Heart right ventricle (tissue), 16 donors: ENCODE measurements at regions of chr1 and their contacts with region 1.

Region 1: DNA sequence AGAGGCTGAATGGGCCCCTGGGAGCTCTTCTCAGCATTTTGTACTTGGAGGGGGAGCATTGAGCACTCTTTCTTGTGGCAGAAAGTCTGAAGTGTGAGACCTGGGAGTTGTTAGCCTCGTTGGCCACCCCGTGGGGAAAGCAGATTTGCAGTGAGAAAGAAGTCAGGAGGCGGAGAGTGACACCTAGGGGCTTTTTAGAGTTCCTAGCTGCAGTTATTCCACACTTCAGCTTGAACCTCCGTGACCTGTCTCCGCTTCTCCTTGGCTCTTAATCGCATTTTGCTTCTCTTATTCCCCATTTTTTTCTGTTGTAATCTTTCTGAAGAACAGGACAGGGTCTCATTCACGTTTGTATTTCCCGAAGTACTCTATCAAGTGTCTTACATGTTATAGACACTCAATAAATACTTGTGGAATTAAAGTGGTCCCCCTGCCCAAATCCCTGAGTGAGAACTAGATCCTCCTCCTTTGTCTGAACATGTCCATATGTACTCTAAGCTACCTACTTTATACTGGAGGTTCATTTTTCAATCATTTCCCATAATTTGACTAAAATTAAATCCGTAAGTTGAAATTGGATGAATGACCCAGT is 14.5 kb upstream of the C1orf141 start:
- DNase-seq: peak; percentile 22 to 68
- ATAC-seq: peak; percentile 81 to 95 (median 90)
- H3K4me3 ChIP-seq: no peak overlapping the region
- H3K27ac ChIP-seq: no peak overlapping the region
- H3K4me1 ChIP-seq: peaks cover 0 to 10% (median 5%) of the 10 kb centered on the region in 9 donors
- H3K27me3 ChIP-seq: peaks cover 0 to 17% (median 4%) of the 10 kb centered on the region in 7 donors
- CTCF ChIP-seq: peak; percentile 60 to 90 (median 78)

Region 2: GRCh38 chr1:66618390-66618789 is 530.9 kb before region 1 on chr1:
- intact Hi-C with region 1: no loop called
- DNase-seq: no peak
- ATAC-seq: no peak
- H3K4me3 ChIP-seq: no peak overlapping the region
- H3K27ac ChIP-seq: no peak overlapping the region
- H3K4me1 ChIP-seq: peaks cover 0 to 3% (median 0%) of the 10 kb centered on the region in 9 donors
- H3K27me3 ChIP-seq: no peaks in the 10 kb centered on the region
- CTCF ChIP-seq: no peak

Region 3: DNA sequence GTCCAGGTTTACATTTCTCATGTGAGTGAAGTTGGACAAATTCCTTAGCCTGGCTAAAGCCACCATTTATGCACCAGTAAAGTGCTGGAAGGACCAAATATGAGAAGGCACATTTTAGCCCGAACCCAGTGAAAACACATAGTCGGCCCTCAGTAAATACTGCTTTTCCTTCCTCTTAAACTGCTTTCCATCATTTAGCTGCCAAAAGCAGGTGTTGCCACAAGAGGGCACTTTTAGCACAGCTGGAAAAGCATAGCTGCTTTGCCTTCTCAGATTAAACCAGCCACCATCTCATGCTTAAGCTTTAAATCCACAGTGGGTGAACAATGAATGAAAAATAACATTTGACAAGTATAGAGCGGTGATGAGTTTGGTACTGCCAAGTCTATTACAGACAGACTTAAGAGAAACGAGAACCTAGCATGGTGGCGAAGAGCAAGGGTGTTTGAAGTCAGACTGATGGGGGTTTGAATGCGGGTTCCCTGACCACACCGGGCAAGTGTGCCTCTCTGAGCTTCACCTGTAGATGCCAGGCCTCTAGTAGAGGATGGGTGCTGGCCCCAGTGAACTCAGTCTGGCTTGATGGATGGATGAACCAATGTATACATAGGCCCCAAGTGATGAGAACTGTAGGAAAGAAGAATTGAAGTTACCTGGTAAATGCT is 153.1 kb before region 1 on chr1:
- intact Hi-C with region 1: loop called (anchors 1 to 5 kb)
- DNase-seq: peak in 1 of 2 donors; percentile 66
- ATAC-seq: peak; percentile 39 to 77 (median 70)
- H3K4me3 ChIP-seq: no peak overlapping the region
- H3K27ac ChIP-seq: no peak overlapping the region
- H3K4me1 ChIP-seq: peaks cover 0 to 7% (median 2%) of the 10 kb centered on the region in 9 donors
- H3K27me3 ChIP-seq: no peaks in the 10 kb centered on the region
- CTCF ChIP-seq: peak in 8 of 9 donors; percentile 34 to 83 (median 76)

Region 4: DNA sequence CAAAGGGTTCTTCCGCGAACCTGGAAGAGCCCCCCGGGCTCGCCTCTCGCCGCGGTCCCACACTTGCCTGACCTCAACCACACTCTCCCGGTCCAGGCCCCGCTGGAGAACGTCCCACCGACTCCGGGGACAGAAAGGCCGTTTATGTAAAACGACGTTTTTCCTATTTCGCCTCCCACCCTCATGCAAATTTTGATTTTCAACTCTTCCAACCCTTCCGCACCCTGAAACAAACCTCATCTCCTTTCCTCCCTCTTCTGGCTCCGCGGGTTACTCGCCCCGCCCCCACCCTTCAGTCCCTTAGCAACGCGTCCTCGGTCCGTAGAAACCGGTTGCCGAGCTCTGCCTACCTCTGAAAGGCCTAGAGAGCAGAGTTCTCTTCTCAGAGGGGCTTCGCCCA is 14.6 kb before region 1 on chr1 and contains the start of gene C1orf141:
- intact Hi-C with region 1: no loop called
- DNase-seq: peak; percentile 9 to 20
- ATAC-seq: peak in 7 of 8 donors; percentile 43 to 80 (median 62)
- H3K4me3 ChIP-seq: peak within 1 kb of the TSS in 9 of 10 donors; percentile 6 to 47 (median 40)
- H3K27ac ChIP-seq: no peak within 1 kb of the TSS
- H3K4me1 ChIP-seq: peaks cover 0 to 12% (median 0%) of the 10 kb centered on the region in 9 donors
- H3K27me3 ChIP-seq: peaks cover 0 to 5% (median 0%) of the 10 kb centered on the region in 7 donors
- CTCF ChIP-seq: no peak
- total RNA-seq, gene C1orf141: not detected

Region 5: DNA sequence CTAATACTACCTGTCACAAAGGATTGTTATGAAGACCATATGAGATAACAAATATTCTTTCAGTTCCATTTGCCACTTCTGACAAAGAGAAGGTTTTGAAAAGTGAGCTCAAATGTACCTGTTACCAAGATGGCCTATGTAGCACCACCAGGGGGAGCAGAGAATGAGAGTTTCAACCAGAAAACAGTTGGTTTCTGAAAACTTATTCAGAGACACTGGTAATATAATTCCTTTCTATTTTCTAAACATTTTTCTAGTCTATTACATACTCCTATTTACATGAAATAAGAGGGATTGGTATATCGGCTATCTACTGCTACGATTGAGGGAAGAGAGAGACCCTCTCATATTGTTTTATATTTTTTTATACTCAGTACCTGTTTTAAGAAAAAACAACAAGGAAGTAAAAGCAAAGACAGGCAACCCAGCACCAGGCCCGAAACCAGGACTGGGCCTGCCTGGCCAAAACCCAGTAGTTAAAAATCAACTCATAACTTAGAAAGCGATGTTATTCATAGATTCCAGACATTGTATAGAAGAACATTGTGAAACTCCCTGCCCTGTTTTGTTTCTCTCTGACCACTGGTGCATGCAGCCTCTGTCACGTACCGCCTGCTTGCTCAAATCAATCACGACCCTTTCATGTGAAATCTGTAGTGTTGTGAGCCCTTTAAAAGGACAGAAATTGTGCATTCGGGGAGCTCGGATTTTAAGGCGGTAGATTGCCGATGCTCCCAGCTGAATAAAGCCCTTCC is 65.3 kb after region 1 on chr1:
- intact Hi-C with region 1: loop called in 1 of 10 experiments (anchors 10 kb)
- DNase-seq: no peak
- ATAC-seq: no peak
- H3K4me3 ChIP-seq: no peak overlapping the region
- H3K27ac ChIP-seq: no peak overlapping the region
- H3K4me1 ChIP-seq: peaks cover 0 to 7% (median 0%) of the 10 kb centered on the region in 9 donors
- H3K27me3 ChIP-seq: no peaks in the 10 kb centered on the region
- CTCF ChIP-seq: peak in 8 of 9 donors; percentile 6 to 56 (median 48)